ENCODE measurements at regions of chr13 and their contacts with region 1.

Region 1: DNA sequence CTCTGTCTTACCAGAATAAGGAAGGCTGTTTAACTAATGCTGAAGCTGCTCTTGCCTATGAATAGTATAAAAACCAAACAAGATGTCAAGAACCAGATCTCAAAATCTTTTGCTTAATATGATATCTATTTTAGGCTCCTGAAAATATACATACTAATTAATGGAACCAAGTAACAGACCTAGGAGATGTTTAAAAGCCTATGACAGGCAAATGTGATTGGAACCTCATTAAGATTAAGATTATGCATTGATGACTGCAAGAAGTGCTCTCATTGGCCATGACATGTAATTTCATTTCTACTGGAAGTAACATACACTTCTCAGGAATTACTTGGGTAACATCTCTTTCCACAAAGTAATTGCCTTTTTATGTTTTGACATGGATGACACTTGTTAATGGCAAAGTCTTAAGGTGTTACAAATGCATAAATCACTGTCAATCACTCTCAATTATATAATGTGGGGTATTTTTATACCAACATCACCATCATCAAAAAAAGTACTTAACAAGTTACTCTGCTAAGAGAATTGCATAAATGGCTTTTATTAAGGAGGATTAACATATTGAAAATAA is 326.9 kb upstream of the MIR17HG start:
- DNase-seq: no peak
- ATAC-seq: no peak
- H3K4me3 ChIP-seq: no peak overlapping the region
- H3K27ac ChIP-seq: no peak overlapping the region
- H3K4me1 ChIP-seq: no peaks in the 10 kb centered on the region
- H3K27me3 ChIP-seq: no peaks in the 10 kb centered on the region
- CTCF ChIP-seq: no peak
- EP300 ChIP-seq: no peak
- POLR2A ChIP-seq: no peak
- RAD21 ChIP-seq: no peak

Region 2: DNA sequence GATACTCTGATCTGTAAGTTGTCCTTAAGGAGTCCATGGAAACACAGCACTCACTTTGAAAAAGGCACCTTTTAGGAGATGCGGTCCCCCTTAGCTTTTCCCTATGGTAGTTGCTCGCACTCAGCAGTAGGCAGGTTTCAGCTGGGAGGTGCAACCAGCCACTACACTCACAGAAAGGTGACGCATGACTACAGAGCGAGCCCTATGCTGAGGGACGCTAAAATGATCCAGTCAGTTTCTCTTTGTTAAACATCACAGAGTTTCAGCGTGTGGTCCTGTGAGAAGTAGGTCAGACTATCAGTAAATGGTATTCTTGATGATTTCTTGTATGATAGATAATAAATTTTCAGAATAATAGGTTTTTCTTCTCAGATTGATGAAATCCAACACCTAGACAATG is 35.8 kb before region 1 on chr13:
- CTCF ChIA-PET with region 1: no interaction called
- POLR2A ChIA-PET with region 1: no interaction called
- in situ Hi-C with region 1: no loop called
- intact Hi-C with region 1: loop called (anchors 1 kb)
- DNase-seq: no peak
- ATAC-seq: no peak
- H3K4me3 ChIP-seq: no peak overlapping the region
- H3K27ac ChIP-seq: no peak overlapping the region
- H3K4me1 ChIP-seq: no peaks in the 10 kb centered on the region
- H3K27me3 ChIP-seq: no peaks in the 10 kb centered on the region
- CTCF ChIP-seq: no peak
- EP300 ChIP-seq: no peak
- POLR2A ChIP-seq: no peak
- RAD21 ChIP-seq: no peak

Measured in HepG2 (cell line).